ENCODE measurements at regions of chr2 and their contacts with region 1.

Region 1: GRCh38 chr2:37020212-37020886 is 54.0 kb upstream of the STRN start:
- DNase-seq: no peak
- ATAC-seq: no peak
- H3K4me3 ChIP-seq: no peak overlapping the region
- H3K4me3 Mint-ChIP-seq: no peak overlapping the region
- H3K27ac ChIP-seq: no peak overlapping the region
- H3K27ac Mint-ChIP-seq: no peak overlapping the region
- H3K4me1 ChIP-seq: no peaks in the 10 kb centered on the region
- H3K4me1 Mint-ChIP-seq: no peaks in the 10 kb centered on the region
- H3K27me3 ChIP-seq: no peaks in the 10 kb centered on the region
- H3K27me3 Mint-ChIP-seq: no peaks in the 10 kb centered on the region
- CTCF ChIP-seq: no peak

Region 2: DNA sequence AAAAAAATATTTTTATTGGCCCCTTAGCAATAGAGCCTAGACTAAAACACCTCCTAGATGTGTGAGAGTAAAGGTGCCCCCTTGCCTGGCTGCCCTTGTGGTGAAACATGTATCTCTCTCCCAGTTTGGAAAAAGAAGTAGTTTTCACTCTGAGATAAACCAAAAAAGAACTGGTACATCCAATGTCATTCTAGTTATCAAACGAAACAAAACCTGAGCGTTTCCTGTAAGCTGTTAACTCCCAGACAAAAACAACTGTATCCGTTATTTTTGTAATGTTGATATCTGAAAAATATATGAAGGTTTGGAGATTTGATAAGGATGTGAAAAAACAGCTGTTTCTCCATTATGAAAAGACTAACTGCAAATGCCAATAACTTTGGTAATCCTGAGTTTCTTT is 39.5 kb after region 1 on chr2:
- CTCF ChIA-PET with region 1: no interaction called
- POLR2A ChIA-PET with region 1: no interaction called
- intact Hi-C with region 1: loop called (anchors 5 kb)
- DNase-seq: no peak
- ATAC-seq: no peak
- H3K4me3 ChIP-seq: no peak overlapping the region
- H3K4me3 Mint-ChIP-seq: no peak overlapping the region
- H3K27ac ChIP-seq: no peak overlapping the region
- H3K27ac Mint-ChIP-seq: no peak overlapping the region
- H3K4me1 ChIP-seq: no peaks in the 10 kb centered on the region
- H3K4me1 Mint-ChIP-seq: no peaks in the 10 kb centered on the region
- H3K27me3 ChIP-seq: no peaks in the 10 kb centered on the region
- H3K27me3 Mint-ChIP-seq: no peaks in the 10 kb centered on the region
- CTCF ChIP-seq: no peak

Measured in B cell (primary cell).